Activated naive CD4-positive, alpha-beta T cell treated with anti-CD3 and anti-CD28 coated beads for 36 hours (primary cell): ENCODE measurements at regions of chr3 and their contacts with region 1.

Region 1: GRCh38 chr3:46923559-46924350 is 46.2 kb downstream of the PTH1R start:
- DNase-seq: peak; percentile 53
- H3K4me3 Mint-ChIP-seq: no peak overlapping the region
- H3K27ac Mint-ChIP-seq: peak overlapping the region; percentile 24
- H3K4me1 Mint-ChIP-seq: peaks cover 22% of the 10 kb centered on the region
- H3K27me3 Mint-ChIP-seq: no peaks in the 10 kb centered on the region

Region 2: GRCh38 chr3:46845791-46846623 is 77.7 kb before region 1 on chr3:
- CTCF ChIA-PET with region 1: no interaction called
- intact Hi-C with region 1: no loop called
- DNase-seq: peak; percentile 75
- H3K4me3 Mint-ChIP-seq: peak overlapping the region; percentile 70
- H3K27ac Mint-ChIP-seq: no peak overlapping the region
- H3K4me1 Mint-ChIP-seq: peaks cover 7% of the 10 kb centered on the region
- H3K27me3 Mint-ChIP-seq: no peaks in the 10 kb centered on the region

Region 3: GRCh38 chr3:47324278-47324865 is 400.6 kb after region 1 on chr3:
- CTCF ChIA-PET with region 1: interaction called, 6 read pairs
- intact Hi-C with region 1: loop called (anchors 5 kb)
- DNase-seq: peak; percentile 66
- H3K4me3 Mint-ChIP-seq: no peak overlapping the region
- H3K27ac Mint-ChIP-seq: no peak overlapping the region
- H3K4me1 Mint-ChIP-seq: no peaks in the 10 kb centered on the region
- H3K27me3 Mint-ChIP-seq: no peaks in the 10 kb centered on the region